B cell (primary cell): ENCODE measurements at regions of chr14 and their contacts with region 1.

Region 1: GRCh38 chr14:55051426-55052268 is at the start of gene MAPK1IP1L:
- DNase-seq: peak; percentile 95
- ATAC-seq: peak; percentile 93
- H3K4me3 ChIP-seq: peak within 1 kb of the TSS; percentile 69 to 99 (median 97)
- H3K4me3 Mint-ChIP-seq: peak within 1 kb of the TSS; percentile 93
- H3K27ac ChIP-seq: peak within 1 kb of the TSS; percentile 100
- H3K27ac Mint-ChIP-seq: peak within 1 kb of the TSS; percentile 95
- H3K4me1 ChIP-seq: peaks cover 18 to 25% of the 10 kb centered on the region in 2 donors
- H3K4me1 Mint-ChIP-seq: peaks cover 39% of the 10 kb centered on the region
- H3K27me3 ChIP-seq: no peaks in the 10 kb centered on the region
- H3K27me3 Mint-ChIP-seq: no peaks in the 10 kb centered on the region
- CTCF ChIP-seq: peak; percentile 99
- total RNA-seq, gene MAPK1IP1L: 108 and 116 TPM in 2 replicates

Region 2: GRCh38 chr14:54396493-54397335 is 654.9 kb before region 1 on chr14 and contains the start of gene CDKN3:
- CTCF ChIA-PET with region 1: no interaction called
- POLR2A ChIA-PET with region 1: no interaction called
- intact Hi-C with region 1: loop called (anchors 2 kb)
- DNase-seq: peak; percentile 98
- ATAC-seq: peak; percentile 93
- H3K4me3 ChIP-seq: peak within 1 kb of the TSS; percentile 36 to 92 (median 75)
- H3K4me3 Mint-ChIP-seq: peak within 1 kb of the TSS; percentile 85
- H3K27ac ChIP-seq: no peak within 1 kb of the TSS
- H3K27ac Mint-ChIP-seq: peak within 1 kb of the TSS; percentile 70
- H3K4me1 ChIP-seq: peaks cover 0 to 13% of the 10 kb centered on the region in 2 donors
- H3K4me1 Mint-ChIP-seq: peaks cover 18% of the 10 kb centered on the region
- H3K27me3 ChIP-seq: no peaks in the 10 kb centered on the region
- H3K27me3 Mint-ChIP-seq: no peaks in the 10 kb centered on the region
- CTCF ChIP-seq: peak; percentile 48
- total RNA-seq, gene CDKN3: 0.42 and 0.87 TPM in 2 replicates

Region 3: DNA sequence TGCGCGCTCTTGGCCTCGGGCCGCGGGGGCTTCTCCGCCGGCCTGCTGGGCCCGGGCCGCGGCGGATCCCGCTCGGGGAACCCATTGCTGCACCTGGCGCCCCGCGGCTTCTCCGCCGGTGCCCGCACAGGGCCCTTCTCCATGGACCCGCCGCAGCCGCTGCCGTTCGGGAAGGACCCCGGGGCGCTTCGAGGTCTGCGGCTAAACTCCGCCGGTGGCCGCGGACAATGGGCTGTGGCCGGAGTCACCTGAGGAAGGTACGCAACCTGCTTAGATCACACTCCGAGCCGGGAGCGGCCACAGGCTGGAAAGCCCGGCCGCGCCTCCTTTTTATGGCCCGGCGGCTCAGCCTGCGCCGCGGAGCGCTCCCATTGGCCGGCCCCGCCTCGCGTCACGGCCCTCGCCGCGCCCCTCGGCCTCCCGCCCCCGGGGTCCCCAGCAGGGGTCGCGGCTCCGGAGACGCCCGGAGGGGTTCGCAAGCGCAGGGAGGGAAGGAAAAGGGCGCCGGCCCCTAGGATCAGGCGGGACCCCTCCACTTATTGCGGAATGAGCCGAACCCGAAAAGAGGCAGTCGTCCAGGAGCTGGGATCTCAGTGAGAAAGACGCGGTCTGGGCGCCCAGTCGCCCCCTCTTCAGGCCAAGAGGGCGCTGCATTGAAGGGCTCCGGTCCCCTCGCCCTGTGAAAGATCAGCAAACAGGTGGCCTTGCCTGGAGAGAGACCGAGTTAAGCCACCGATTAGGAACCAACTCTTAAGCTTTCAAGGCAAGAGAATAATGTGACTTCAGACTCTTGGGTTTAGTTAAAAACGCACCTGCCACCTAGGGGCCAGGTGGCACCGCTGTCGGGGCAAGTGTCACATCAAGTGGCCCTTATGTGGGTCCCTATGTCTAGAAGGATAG is 148.9 kb before region 1 on chr14 and contains the start of gene GCH1:
- CTCF ChIA-PET with region 1: interaction called, 5 read pairs
- POLR2A ChIA-PET with region 1: no interaction called
- intact Hi-C with region 1: loop called (anchors 1 kb)
- DNase-seq: peak; percentile 92
- ATAC-seq: peak; percentile 87
- H3K4me3 ChIP-seq: peak within 1 kb of the TSS; percentile 50 to 92 (median 83)
- H3K4me3 Mint-ChIP-seq: peak within 1 kb of the TSS; percentile 91
- H3K27ac ChIP-seq: peak within 1 kb of the TSS; percentile 83 to 90
- H3K27ac Mint-ChIP-seq: peak within 1 kb of the TSS; percentile 92
- H3K4me1 ChIP-seq: peaks cover 9 to 16% of the 10 kb centered on the region in 2 donors
- H3K4me1 Mint-ChIP-seq: peaks cover 18% of the 10 kb centered on the region
- H3K27me3 ChIP-seq: no peaks in the 10 kb centered on the region
- H3K27me3 Mint-ChIP-seq: no peaks in the 10 kb centered on the region
- CTCF ChIP-seq: peak; percentile 85
- total RNA-seq, gene GCH1: 23.7 and 24.6 TPM in 2 replicates

Region 4: DNA sequence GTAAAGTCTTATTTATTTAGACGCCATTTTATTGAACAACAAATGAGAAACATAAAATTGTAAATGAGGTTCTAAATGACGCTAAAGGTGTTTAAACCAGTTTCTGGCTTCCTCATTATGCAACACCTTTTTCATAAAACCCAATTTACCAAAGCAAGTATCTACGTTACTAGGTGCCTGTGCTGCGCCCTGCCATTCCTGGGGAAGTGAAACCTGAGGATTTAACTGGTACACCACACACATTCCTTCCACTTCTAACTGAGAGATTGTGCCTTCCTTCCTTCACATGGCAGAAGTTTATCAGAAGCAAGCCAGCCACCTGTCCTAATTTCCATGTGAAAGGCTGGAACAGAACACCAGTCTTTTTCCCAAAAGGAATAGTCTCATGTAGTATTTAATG is 108.7 kb before region 1 on chr14:
- CTCF ChIA-PET with region 1: no interaction called
- POLR2A ChIA-PET with region 1: no interaction called
- intact Hi-C with region 1: no loop called
- DNase-seq: peak; percentile 42
- ATAC-seq: peak; percentile 43
- H3K4me3 ChIP-seq: no peak overlapping the region
- H3K4me3 Mint-ChIP-seq: no peak overlapping the region
- H3K27ac ChIP-seq: peak overlapping the region in 1 of 2 donors; percentile 29
- H3K27ac Mint-ChIP-seq: peak overlapping the region; percentile 12
- H3K4me1 ChIP-seq: peaks cover 5 to 12% of the 10 kb centered on the region in 2 donors
- H3K4me1 Mint-ChIP-seq: peaks cover 7% of the 10 kb centered on the region
- H3K27me3 ChIP-seq: no peaks in the 10 kb centered on the region
- H3K27me3 Mint-ChIP-seq: no peaks in the 10 kb centered on the region
- CTCF ChIP-seq: no peak

Region 5: DNA sequence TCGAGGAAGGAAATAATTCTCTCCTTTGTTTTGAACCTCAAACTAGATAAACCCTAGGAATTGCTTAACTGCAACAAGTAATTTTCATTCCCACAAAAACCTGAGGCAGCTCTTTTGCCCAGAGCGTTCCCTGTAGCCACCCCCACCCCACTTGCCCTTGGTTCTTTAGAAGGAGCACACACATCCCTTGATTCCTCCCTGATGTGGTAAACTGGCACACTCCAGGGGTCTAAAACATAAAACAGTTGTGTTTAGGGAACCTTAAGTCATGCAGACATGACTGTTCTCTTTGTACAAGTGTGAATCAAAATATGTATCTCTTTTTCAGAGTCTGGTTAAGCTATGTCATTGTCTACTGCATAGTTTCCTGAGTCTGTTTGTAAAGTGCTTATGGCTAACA is 13.8 kb after region 1 on chr14:
- CTCF ChIA-PET with region 1: interaction called, 32 read pairs
- POLR2A ChIA-PET with region 1: interaction called, 5 read pairs
- intact Hi-C with region 1: no loop called
- DNase-seq: no peak
- ATAC-seq: no peak
- H3K4me3 ChIP-seq: no peak overlapping the region
- H3K4me3 Mint-ChIP-seq: no peak overlapping the region
- H3K27ac ChIP-seq: peak overlapping the region in 1 of 2 donors; percentile 23
- H3K27ac Mint-ChIP-seq: peak overlapping the region; percentile 68
- H3K4me1 ChIP-seq: peaks cover 0 to 4% of the 10 kb centered on the region in 2 donors
- H3K4me1 Mint-ChIP-seq: peaks cover 54% of the 10 kb centered on the region
- H3K27me3 ChIP-seq: no peaks in the 10 kb centered on the region
- H3K27me3 Mint-ChIP-seq: no peaks in the 10 kb centered on the region
- CTCF ChIP-seq: no peak

Region 6: GRCh38 chr14:55094321-55095157 is 42.9 kb after region 1 on chr14:
- CTCF ChIA-PET with region 1: interaction called, 22 read pairs
- POLR2A ChIA-PET with region 1: no interaction called
- intact Hi-C with region 1: loop called (anchors 1 kb)
- DNase-seq: no peak
- ATAC-seq: no peak
- H3K4me3 ChIP-seq: no peak overlapping the region
- H3K4me3 Mint-ChIP-seq: no peak overlapping the region
- H3K27ac ChIP-seq: no peak overlapping the region
- H3K27ac Mint-ChIP-seq: no peak overlapping the region
- H3K4me1 ChIP-seq: peaks cover 14 to 19% of the 10 kb centered on the region in 2 donors
- H3K4me1 Mint-ChIP-seq: peaks cover 18% of the 10 kb centered on the region
- H3K27me3 ChIP-seq: no peaks in the 10 kb centered on the region
- H3K27me3 Mint-ChIP-seq: no peaks in the 10 kb centered on the region
- CTCF ChIP-seq: no peak

Region 7: DNA sequence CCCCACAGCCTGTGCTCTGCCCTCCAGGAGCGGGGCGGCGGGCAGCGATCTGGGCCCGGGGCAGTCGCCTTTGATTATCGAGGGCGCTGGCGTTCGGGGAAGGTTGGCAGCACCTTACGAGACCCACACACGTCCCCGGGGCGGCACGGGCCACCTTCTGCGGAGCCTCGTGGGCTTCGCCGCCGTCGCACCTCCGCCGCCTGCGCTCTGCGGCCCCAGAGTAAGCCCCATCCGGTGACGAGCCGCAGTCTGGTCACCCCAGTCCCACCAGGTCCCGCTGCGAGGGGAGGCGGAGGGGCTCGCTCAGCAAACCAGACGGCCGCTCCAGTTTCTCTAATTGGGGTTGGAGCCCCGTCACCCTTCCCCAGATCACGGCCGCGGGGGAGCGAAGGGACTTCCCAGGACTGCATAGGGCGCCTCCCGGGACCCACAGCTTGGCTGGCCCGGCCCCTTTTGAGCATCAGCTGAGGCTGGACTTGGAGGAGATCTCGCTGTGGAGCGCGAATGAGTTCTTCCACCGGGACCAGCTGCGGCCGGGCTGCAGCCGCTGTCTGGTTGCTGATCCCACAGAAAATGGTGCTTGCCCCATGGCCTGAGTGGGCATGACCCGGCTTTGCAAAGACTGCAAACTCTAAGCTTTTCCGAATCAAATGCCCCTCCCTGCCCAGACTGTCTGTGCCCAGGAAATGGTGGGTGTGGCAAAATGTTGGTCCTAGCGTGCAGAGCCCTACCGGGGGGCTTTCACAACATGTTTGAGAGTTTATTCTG is 78.0 kb after region 1 on chr14:
- CTCF ChIA-PET with region 1: no interaction called
- POLR2A ChIA-PET with region 1: no interaction called
- intact Hi-C with region 1: no loop called
- DNase-seq: peak; percentile 73
- ATAC-seq: peak; percentile 67
- H3K4me3 ChIP-seq: peak overlapping the region; percentile 36 to 73 (median 58)
- H3K4me3 Mint-ChIP-seq: peak overlapping the region; percentile 89
- H3K27ac ChIP-seq: no peak overlapping the region
- H3K27ac Mint-ChIP-seq: peak overlapping the region; percentile 59
- H3K4me1 ChIP-seq: peaks cover 7 to 14% of the 10 kb centered on the region in 2 donors
- H3K4me1 Mint-ChIP-seq: peaks cover 15% of the 10 kb centered on the region
- H3K27me3 ChIP-seq: peaks cover 0 to 16% (median 3%) of the 10 kb centered on the region in 4 experiments
- H3K27me3 Mint-ChIP-seq: peaks cover 3% of the 10 kb centered on the region
- CTCF ChIP-seq: no peak

Region 8: GRCh38 chr14:55191203-55192053 is 139.8 kb after region 1 on chr14 and contains the start of gene DLGAP5:
- CTCF ChIA-PET with region 1: no interaction called
- POLR2A ChIA-PET with region 1: no interaction called
- intact Hi-C with region 1: loop called (anchors 1 kb)
- DNase-seq: peak; percentile 91
- ATAC-seq: peak; percentile 98
- H3K4me3 ChIP-seq: peak within 1 kb of the TSS; percentile 38 to 72 (median 68)
- H3K4me3 Mint-ChIP-seq: peak within 1 kb of the TSS; percentile 89
- H3K27ac ChIP-seq: peak within 1 kb of the TSS in 1 of 2 donors; percentile 68
- H3K27ac Mint-ChIP-seq: peak within 1 kb of the TSS; percentile 42
- H3K4me1 ChIP-seq: peaks cover 9 to 13% of the 10 kb centered on the region in 2 donors
- H3K4me1 Mint-ChIP-seq: peaks cover 14% of the 10 kb centered on the region
- H3K27me3 ChIP-seq: no peaks in the 10 kb centered on the region
- H3K27me3 Mint-ChIP-seq: no peaks in the 10 kb centered on the region
- CTCF ChIP-seq: no peak
- total RNA-seq, gene DLGAP5: not detected in 2 replicates

Region 9: GRCh38 chr14:55430024-55430690 is 378.5 kb after region 1 on chr14:
- CTCF ChIA-PET with region 1: no interaction called
- POLR2A ChIA-PET with region 1: no interaction called
- intact Hi-C with region 1: no loop called
- DNase-seq: peak; percentile 57
- ATAC-seq: peak; percentile 64
- H3K4me3 ChIP-seq: no peak overlapping the region
- H3K4me3 Mint-ChIP-seq: no peak overlapping the region
- H3K27ac ChIP-seq: no peak overlapping the region
- H3K27ac Mint-ChIP-seq: no peak overlapping the region
- H3K4me1 ChIP-seq: peaks cover 0 to 3% of the 10 kb centered on the region in 2 donors
- H3K4me1 Mint-ChIP-seq: peaks cover 9% of the 10 kb centered on the region
- H3K27me3 ChIP-seq: no peaks in the 10 kb centered on the region
- H3K27me3 Mint-ChIP-seq: peaks cover 7% of the 10 kb centered on the region
- CTCF ChIP-seq: peak; percentile 34